B cell (primary cell): ENCODE measurements at regions of chr12 and their contacts with region 1.

Region 1: GRCh38 chr12:94459728-94460615 is at the start of gene CEP83:
- DNase-seq: peak; percentile 97
- ATAC-seq: peak; percentile 96
- H3K4me3 ChIP-seq: peak within 1 kb of the TSS; percentile 77 to 95 (median 88)
- H3K4me3 Mint-ChIP-seq: peak within 1 kb of the TSS; percentile 97
- H3K27ac ChIP-seq: peak within 1 kb of the TSS; percentile 92 to 96
- H3K27ac Mint-ChIP-seq: peak within 1 kb of the TSS; percentile 94
- H3K4me1 ChIP-seq: peaks cover 11 to 19% of the 10 kb centered on the region in 2 donors
- H3K4me1 Mint-ChIP-seq: peaks cover 23% of the 10 kb centered on the region
- H3K27me3 ChIP-seq: no peaks in the 10 kb centered on the region
- H3K27me3 Mint-ChIP-seq: no peaks in the 10 kb centered on the region
- CTCF ChIP-seq: no peak
- total RNA-seq, gene CEP83: 24.8 and 27.2 TPM in 2 replicates

Region 2: GRCh38 chr12:92943482-92944250 is 1516.3 kb before region 1 on chr12:
- CTCF ChIA-PET with region 1: no interaction called
- POLR2A ChIA-PET with region 1: no interaction called
- intact Hi-C with region 1: loop called (anchors 10 kb)
- DNase-seq: no peak
- ATAC-seq: no peak
- H3K4me3 ChIP-seq: no peak overlapping the region
- H3K4me3 Mint-ChIP-seq: no peak overlapping the region
- H3K27ac ChIP-seq: peak overlapping the region in 1 of 2 donors; percentile 9
- H3K27ac Mint-ChIP-seq: peak overlapping the region; percentile 61
- H3K4me1 ChIP-seq: peaks cover 15 to 32% of the 10 kb centered on the region in 2 donors
- H3K4me1 Mint-ChIP-seq: peaks cover 31% of the 10 kb centered on the region
- H3K27me3 ChIP-seq: no peaks in the 10 kb centered on the region
- H3K27me3 Mint-ChIP-seq: no peaks in the 10 kb centered on the region
- CTCF ChIP-seq: no peak

Region 3: DNA sequence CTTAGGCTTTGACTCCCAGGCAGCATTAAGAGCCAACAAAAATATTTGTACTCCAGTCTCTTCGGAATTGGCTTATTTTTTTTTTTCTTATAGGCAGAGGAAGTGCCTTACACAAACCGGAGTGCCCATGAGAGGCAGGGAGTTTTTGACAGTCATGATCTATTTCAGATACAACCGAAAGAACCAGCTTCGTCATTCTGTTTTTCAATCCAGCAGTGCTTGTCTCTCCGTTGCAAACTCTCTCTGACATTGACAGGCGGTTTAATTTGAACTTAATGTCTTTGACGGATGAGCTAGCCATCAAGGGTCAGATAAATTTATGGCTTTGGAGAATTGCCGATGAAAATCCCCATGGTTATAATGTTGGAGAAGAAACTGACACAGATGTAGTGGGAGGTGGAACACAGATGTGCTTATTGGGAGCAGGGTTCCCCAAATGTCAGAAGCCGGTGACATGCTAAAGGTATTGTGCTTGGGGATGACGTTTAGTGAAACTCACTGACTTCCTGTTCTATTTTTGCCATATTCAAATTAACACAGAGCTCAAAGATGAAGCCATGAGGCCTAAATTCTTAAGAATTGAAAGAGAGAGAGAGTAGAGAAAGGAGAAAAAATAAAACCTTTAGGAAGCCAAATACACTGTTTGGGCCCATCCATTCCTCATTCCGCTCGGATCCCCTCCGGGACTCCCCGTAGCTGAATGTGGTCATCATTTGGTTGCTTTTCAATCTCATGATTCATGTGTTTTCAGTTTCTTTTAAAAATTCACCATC is 251.9 kb before region 1 on chr12:
- CTCF ChIA-PET with region 1: no interaction called
- POLR2A ChIA-PET with region 1: no interaction called
- intact Hi-C with region 1: loop called (anchors 2 kb)
- DNase-seq: peak; percentile 89
- ATAC-seq: peak; percentile 84
- H3K4me3 ChIP-seq: peak overlapping the region; percentile 26 to 65 (median 57)
- H3K4me3 Mint-ChIP-seq: peak overlapping the region; percentile 87
- H3K27ac ChIP-seq: peak overlapping the region; percentile 93 to 96
- H3K27ac Mint-ChIP-seq: peak overlapping the region; percentile 96
- H3K4me1 ChIP-seq: peaks cover 54 to 56% of the 10 kb centered on the region in 2 donors
- H3K4me1 Mint-ChIP-seq: peaks cover 62% of the 10 kb centered on the region
- H3K27me3 ChIP-seq: no peaks in the 10 kb centered on the region
- H3K27me3 Mint-ChIP-seq: no peaks in the 10 kb centered on the region
- CTCF ChIP-seq: no peak

Region 4: DNA sequence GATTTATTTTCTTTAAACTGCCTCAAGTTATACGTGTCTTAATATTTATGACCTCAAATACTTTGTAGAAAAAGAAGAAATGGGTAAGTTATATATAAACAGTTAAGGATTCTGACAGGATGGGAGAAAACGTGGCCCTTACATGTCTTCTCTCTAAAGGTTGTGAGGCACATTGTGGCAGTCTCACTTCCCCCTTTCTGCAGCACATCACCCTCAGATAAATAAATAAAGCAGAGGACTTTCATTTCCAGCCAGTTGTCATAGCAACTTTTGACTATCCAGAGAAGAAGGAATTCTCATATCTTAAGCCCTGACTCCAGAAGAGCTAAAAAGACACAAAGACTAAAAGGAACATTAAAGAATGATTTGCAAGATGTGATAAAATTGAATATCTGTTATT is 28.5 kb after region 1 on chr12:
- CTCF ChIA-PET with region 1: no interaction called
- POLR2A ChIA-PET with region 1: no interaction called
- intact Hi-C with region 1: loop called (anchors 1 kb)
- DNase-seq: peak; percentile 74
- ATAC-seq: peak; percentile 95
- H3K4me3 ChIP-seq: no peak overlapping the region
- H3K4me3 Mint-ChIP-seq: no peak overlapping the region
- H3K27ac ChIP-seq: peak overlapping the region in 1 of 2 donors; percentile 31
- H3K27ac Mint-ChIP-seq: peak overlapping the region; percentile 47
- H3K4me1 ChIP-seq: peaks cover 5 to 13% of the 10 kb centered on the region in 2 donors
- H3K4me1 Mint-ChIP-seq: peaks cover 16% of the 10 kb centered on the region
- H3K27me3 ChIP-seq: no peaks in the 10 kb centered on the region
- H3K27me3 Mint-ChIP-seq: no peaks in the 10 kb centered on the region
- CTCF ChIP-seq: no peak

Region 5: DNA sequence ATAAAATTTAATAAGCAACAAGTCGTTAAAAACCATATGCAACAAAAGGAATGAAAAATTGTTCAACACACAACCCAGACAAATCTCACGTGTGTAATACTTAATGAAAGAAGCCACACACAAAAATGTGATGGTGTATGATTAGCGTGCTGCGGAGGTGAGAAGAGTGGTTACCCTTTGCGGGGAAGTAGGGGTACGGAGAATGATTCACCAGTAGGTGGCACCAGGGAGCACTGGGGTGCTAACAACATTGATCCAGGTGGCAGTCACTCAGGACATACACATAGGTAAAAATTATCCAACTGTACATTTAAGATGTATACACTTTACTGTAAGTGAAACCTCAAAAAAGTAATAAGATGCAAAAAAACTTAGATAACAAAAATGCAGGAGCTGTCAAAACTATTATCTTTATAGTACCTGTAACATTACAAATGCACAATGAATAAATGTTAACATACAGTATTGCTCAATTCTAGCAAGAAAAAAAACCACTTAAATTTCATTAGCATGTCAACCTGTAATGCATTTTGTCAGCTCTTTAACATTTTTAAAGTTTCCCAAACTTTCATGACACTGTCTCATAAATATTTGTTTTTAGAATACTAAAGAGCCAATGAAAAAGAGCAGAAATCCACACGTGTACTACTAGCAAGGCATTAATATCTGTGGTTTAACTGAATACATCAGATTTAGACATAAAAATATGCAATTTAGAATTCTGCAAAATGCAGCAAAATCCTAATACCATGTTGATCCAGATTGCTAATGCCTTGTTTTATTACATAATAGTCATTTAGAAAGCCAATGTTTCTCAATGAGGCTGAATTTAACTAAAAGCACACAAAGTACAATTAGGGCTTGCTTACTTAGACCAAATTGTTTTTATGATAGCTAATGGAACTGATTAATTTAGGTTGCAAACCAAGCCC is 143.7 kb after region 1 on chr12:
- CTCF ChIA-PET with region 1: no interaction called
- POLR2A ChIA-PET with region 1: no interaction called
- intact Hi-C with region 1: no loop called
- DNase-seq: peak; percentile 68
- ATAC-seq: peak; percentile 70
- H3K4me3 ChIP-seq: no peak overlapping the region
- H3K4me3 Mint-ChIP-seq: no peak overlapping the region
- H3K27ac ChIP-seq: no peak overlapping the region
- H3K27ac Mint-ChIP-seq: no peak overlapping the region
- H3K4me1 ChIP-seq: no peaks in the 10 kb centered on the region
- H3K4me1 Mint-ChIP-seq: no peaks in the 10 kb centered on the region
- H3K27me3 ChIP-seq: no peaks in the 10 kb centered on the region
- H3K27me3 Mint-ChIP-seq: no peaks in the 10 kb centered on the region
- CTCF ChIP-seq: peak; percentile 77

Region 6: GRCh38 chr12:95003213-95003920 is 543.4 kb after region 1 on chr12 and contains the start of gene NDUFA12:
- CTCF ChIA-PET with region 1: no interaction called
- POLR2A ChIA-PET with region 1: no interaction called
- intact Hi-C with region 1: loop called (anchors 10 kb)
- DNase-seq: peak; percentile 96
- ATAC-seq: peak; percentile 100
- H3K4me3 ChIP-seq: peak within 1 kb of the TSS; percentile 75 to 98 (median 81)
- H3K4me3 Mint-ChIP-seq: peak within 1 kb of the TSS; percentile 98
- H3K27ac ChIP-seq: peak within 1 kb of the TSS; percentile 82
- H3K27ac Mint-ChIP-seq: peak within 1 kb of the TSS; percentile 98
- H3K4me1 ChIP-seq: peaks cover 15 to 24% of the 10 kb centered on the region in 2 donors
- H3K4me1 Mint-ChIP-seq: peaks cover 38% of the 10 kb centered on the region
- H3K27me3 ChIP-seq: no peaks in the 10 kb centered on the region
- H3K27me3 Mint-ChIP-seq: no peaks in the 10 kb centered on the region
- CTCF ChIP-seq: no peak
- total RNA-seq, gene NDUFA12: 41.7 and 42.0 TPM in 2 replicates